ENCODE measurements at regions of chr9 and their contacts with region 1.

Region 1: DNA sequence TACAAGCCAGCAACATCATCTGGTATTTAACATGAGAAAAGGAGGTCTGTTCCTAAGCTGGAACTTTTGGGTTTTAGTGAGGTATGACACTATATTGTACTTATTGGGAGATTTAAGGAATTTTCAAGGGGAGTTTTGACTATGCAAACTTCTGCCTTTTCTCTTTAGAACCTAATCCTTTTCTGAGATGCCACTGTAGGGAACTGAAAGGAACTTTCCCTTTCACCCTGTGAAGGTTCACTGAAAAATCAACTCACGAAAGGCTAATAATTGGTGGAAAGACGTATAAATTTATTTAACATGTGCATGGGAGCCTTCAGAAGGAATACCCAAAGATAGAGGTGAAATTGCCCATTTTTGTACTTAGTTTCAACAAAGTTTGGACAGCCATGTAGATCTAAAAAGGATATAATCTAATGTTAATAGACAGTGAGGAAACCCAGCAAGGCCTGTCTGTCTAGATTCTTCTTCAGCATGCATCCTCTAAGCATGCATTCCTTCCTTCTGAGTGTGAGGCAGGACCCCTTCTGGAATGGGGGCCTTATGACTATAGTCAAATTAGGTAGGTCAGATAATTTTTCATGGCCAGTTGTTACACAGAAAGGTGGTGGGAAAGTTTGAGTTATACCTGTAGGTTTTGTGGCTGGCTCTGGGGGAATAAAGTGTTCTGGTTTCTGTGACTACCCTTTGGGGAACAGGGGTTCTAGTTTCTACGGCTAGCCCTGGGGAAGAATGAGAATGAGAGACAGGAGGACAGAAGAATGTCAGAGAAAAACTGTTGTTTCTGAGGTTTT is 200.3 kb downstream of the C9orf152 start:
- DNase-seq: no peak
- ATAC-seq: no peak
- H3K4me3 ChIP-seq: no peak overlapping the region
- H3K4me3 Mint-ChIP-seq: no peak overlapping the region
- H3K27ac ChIP-seq: no peak overlapping the region
- H3K27ac Mint-ChIP-seq: peak overlapping the region; percentile 39
- H3K4me1 ChIP-seq: peaks cover 15 to 35% of the 10 kb centered on the region in 2 donors
- H3K4me1 Mint-ChIP-seq: peaks cover 40% of the 10 kb centered on the region
- H3K27me3 ChIP-seq: no peaks in the 10 kb centered on the region
- H3K27me3 Mint-ChIP-seq: no peaks in the 10 kb centered on the region
- CTCF ChIP-seq: no peak

Region 2: DNA sequence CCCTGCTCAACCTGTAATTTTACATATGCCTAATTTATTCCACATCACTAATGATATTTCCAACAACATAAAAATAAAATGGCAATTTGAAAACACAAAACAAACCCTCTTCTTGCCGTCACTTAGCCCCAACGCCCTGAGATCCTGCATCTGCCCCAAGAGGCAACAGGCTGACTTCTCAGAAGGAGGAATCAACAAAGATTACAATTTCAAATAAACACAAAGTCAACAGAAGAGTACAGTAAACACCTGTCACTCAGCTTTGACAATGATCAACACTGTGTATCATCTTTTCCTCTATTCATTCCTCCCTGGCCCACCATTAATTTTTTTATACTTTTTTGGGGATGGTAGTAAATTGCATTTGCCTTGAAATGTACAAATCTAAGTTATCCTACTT is 706.7 kb before region 1 on chr9:
- CTCF ChIA-PET with region 1: no interaction called
- POLR2A ChIA-PET with region 1: no interaction called
- intact Hi-C with region 1: no loop called
- DNase-seq: no peak
- ATAC-seq: no peak
- H3K4me3 ChIP-seq: no peak overlapping the region
- H3K4me3 Mint-ChIP-seq: no peak overlapping the region
- H3K27ac ChIP-seq: no peak overlapping the region
- H3K27ac Mint-ChIP-seq: no peak overlapping the region
- H3K4me1 ChIP-seq: no peaks in the 10 kb centered on the region
- H3K4me1 Mint-ChIP-seq: no peaks in the 10 kb centered on the region
- H3K27me3 ChIP-seq: peaks cover 0 to 7% (median 0%) of the 10 kb centered on the region in 4 experiments
- H3K27me3 Mint-ChIP-seq: peaks cover 28% of the 10 kb centered on the region
- CTCF ChIP-seq: no peak

Region 3: GRCh38 chr9:109311731-109312130 is 695.9 kb before region 1 on chr9:
- CTCF ChIA-PET with region 1: no interaction called
- POLR2A ChIA-PET with region 1: no interaction called
- intact Hi-C with region 1: no loop called
- DNase-seq: peak; percentile 21
- ATAC-seq: peak; percentile 82
- H3K4me3 ChIP-seq: no peak overlapping the region
- H3K4me3 Mint-ChIP-seq: no peak overlapping the region
- H3K27ac ChIP-seq: no peak overlapping the region
- H3K27ac Mint-ChIP-seq: no peak overlapping the region
- H3K4me1 ChIP-seq: no peaks in the 10 kb centered on the region
- H3K4me1 Mint-ChIP-seq: peaks cover 5% of the 10 kb centered on the region
- H3K27me3 ChIP-seq: peaks cover 0 to 18% (median 5%) of the 10 kb centered on the region in 4 experiments
- H3K27me3 Mint-ChIP-seq: peaks cover 59% of the 10 kb centered on the region
- CTCF ChIP-seq: no peak

Region 4: GRCh38 chr9:110033869-110034268 is 26.2 kb after region 1 on chr9:
- CTCF ChIA-PET with region 1: no interaction called
- POLR2A ChIA-PET with region 1: no interaction called
- intact Hi-C with region 1: no loop called
- DNase-seq: no peak
- ATAC-seq: no peak
- H3K4me3 ChIP-seq: no peak overlapping the region
- H3K4me3 Mint-ChIP-seq: no peak overlapping the region
- H3K27ac ChIP-seq: no peak overlapping the region
- H3K27ac Mint-ChIP-seq: no peak overlapping the region
- H3K4me1 ChIP-seq: peaks cover 3 to 6% of the 10 kb centered on the region in 2 donors
- H3K4me1 Mint-ChIP-seq: peaks cover 14% of the 10 kb centered on the region
- H3K27me3 ChIP-seq: no peaks in the 10 kb centered on the region
- H3K27me3 Mint-ChIP-seq: no peaks in the 10 kb centered on the region
- CTCF ChIP-seq: no peak

Region 5: GRCh38 chr9:110048403-110048975 is 40.8 kb after region 1 on chr9:
- CTCF ChIA-PET with region 1: no interaction called
- POLR2A ChIA-PET with region 1: no interaction called
- intact Hi-C with region 1: loop called (anchors 5 kb)
- DNase-seq: peak; percentile 91
- ATAC-seq: peak; percentile 95
- H3K4me3 ChIP-seq: peak overlapping the region; percentile 79 to 98 (median 88)
- H3K4me3 Mint-ChIP-seq: peak overlapping the region; percentile 98
- H3K27ac ChIP-seq: peak overlapping the region; percentile 40 to 71
- H3K27ac Mint-ChIP-seq: peak overlapping the region; percentile 93
- H3K4me1 ChIP-seq: peaks cover 42 to 47% of the 10 kb centered on the region in 2 donors
- H3K4me1 Mint-ChIP-seq: peaks cover 56% of the 10 kb centered on the region
- H3K27me3 ChIP-seq: no peaks in the 10 kb centered on the region
- H3K27me3 Mint-ChIP-seq: no peaks in the 10 kb centered on the region
- CTCF ChIP-seq: no peak

Region 6: GRCh38 chr9:110389148-110389750 is 381.6 kb after region 1 on chr9:
- CTCF ChIA-PET with region 1: no interaction called
- POLR2A ChIA-PET with region 1: no interaction called
- intact Hi-C with region 1: no loop called
- DNase-seq: no peak
- ATAC-seq: no peak
- H3K4me3 ChIP-seq: no peak overlapping the region
- H3K4me3 Mint-ChIP-seq: no peak overlapping the region
- H3K27ac ChIP-seq: no peak overlapping the region
- H3K27ac Mint-ChIP-seq: no peak overlapping the region
- H3K4me1 ChIP-seq: no peaks in the 10 kb centered on the region
- H3K4me1 Mint-ChIP-seq: no peaks in the 10 kb centered on the region
- H3K27me3 ChIP-seq: peaks cover 0 to 3% (median 0%) of the 10 kb centered on the region in 4 experiments
- H3K27me3 Mint-ChIP-seq: peaks cover 18% of the 10 kb centered on the region
- CTCF ChIP-seq: no peak

Measured in B cell (primary cell).